ENCODE measurements at regions of chr16 and their contacts with region 1.

Region 1: DNA sequence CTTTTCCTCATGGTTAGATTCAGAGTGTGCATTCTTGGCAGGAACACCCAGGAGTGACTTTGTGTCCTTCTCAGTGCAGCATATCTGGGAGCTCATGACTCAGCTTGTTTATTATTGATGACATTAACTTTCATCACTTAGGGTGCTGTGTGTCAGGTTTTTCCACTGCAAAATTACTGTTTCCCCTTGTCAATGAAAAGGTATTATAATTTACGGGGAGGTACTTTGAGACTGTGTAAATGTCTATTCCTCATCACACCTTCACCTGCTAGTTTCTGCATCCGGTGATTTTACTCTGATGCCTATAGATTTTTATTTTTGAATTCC is 50.5 kb downstream of the WWP2 start:
- H3K4me3 ChIP-seq: no peak overlapping the region
- H3K27ac ChIP-seq: no peak overlapping the region
- H3K4me1 ChIP-seq: no peaks in the 10 kb centered on the region
- CTCF ChIP-seq: no peak

Region 2: DNA sequence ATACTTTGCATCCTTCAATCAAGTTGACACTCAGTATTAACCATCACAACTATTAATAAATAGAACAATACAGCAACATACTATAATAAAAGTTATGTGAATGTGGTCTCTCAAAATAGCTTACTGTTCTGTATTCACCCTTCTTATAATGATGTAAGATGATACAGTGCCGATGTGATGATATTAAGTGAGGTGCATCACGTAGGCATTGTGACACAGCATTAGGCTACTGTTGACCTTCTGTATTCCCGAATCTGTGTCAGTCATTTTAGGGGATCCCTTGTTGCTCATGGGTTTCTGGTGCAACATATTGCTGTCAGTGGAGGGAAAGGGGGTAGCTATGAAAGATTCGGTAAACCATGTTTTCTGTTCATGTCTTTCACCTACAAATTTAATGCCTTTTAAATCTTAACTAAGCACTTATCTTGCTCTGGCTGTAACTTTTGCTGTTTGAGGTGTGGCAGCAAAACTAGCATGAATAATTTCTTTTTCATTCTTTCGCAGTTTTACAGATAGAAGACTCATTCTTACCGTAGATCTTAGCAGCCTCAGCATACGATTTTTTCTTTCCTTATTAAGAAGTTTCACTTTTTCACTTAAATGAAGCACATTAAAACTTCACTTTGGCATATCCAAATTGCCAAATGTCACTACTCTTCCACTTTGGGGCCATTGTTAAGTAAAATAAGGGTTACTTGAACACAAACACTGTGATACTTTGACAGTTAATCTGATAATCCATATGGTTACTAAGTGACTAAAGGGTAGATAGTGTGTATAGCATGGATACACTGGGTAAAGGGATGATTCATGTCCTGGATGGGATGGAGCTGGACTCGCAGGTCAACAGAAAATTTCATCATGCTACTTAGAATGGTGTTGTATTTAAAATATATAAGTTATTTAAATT is 217.3 kb before region 1 on chr16:
- CTCF ChIA-PET with region 1: no interaction called
- POLR2A ChIA-PET with region 1: no interaction called
- H3K4me3 ChIP-seq: no peak overlapping the region
- H3K27ac ChIP-seq: no peak overlapping the region
- H3K4me1 ChIP-seq: 0 out of 2 replicates have a peak, but pooled peaks cover 3% of the 10 kb centered on the region
- CTCF ChIP-seq: no peak

Region 3: GRCh38 chr16:69796351-69797118 is 16.1 kb before region 1 on chr16:
- CTCF ChIA-PET with region 1: interaction called, 18 read pairs
- POLR2A ChIA-PET with region 1: no interaction called
- H3K4me3 ChIP-seq: no peak overlapping the region
- H3K27ac ChIP-seq: no peak overlapping the region
- H3K4me1 ChIP-seq: no peaks in the 10 kb centered on the region
- CTCF ChIP-seq: peak; percentile 67; the same call in 1 of the 2 replicates

Measured in HEK293 (cell line).